CD4-positive, alpha-beta memory T cell (primary cell): ENCODE measurements at regions of chr14 and their contacts with region 1.

Region 1: DNA sequence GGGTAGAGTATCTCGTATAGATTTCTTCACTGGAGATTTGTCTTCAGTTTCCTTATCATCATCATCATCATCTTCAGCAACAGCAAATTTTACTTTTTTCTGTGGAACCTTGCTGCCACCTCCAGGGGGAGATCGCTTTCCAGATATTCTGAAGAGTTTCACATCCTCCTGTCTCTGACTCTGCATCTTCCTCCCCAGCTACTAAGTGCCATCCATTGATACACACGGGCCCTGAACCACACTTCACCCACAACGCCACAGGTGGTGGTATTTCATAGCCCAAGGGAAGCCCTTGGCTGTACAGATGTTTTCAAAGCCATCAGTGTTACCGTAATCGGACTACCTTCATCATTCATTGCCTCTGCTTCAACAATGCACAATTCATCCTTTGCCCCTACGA is 82.2 kb downstream of the PPP2R5C start:
- DNase-seq: peak; percentile 65 to 83 (median 67)
- H3K4me3 ChIP-seq: no peak overlapping the region
- H3K4me3 Mint-ChIP-seq: peak overlapping the region in 7 of 8 donors; percentile 23 to 81 (median 50)
- H3K27ac ChIP-seq: peak overlapping the region; percentile 7
- H3K27ac Mint-ChIP-seq: peak overlapping the region; percentile 76 to 95 (median 92)
- H3K4me1 ChIP-seq: peaks cover 96% of the 10 kb centered on the region
- H3K4me1 Mint-ChIP-seq: peaks cover 72 to 98% (median 86%) of the 10 kb centered on the region in 4 donors
- H3K27me3 ChIP-seq: no peaks in the 10 kb centered on the region
- H3K27me3 Mint-ChIP-seq: no peaks in the 10 kb centered on the region

Region 2: GRCh38 chr14:101774006-101774795 is 69.5 kb before region 1 on chr14:
- CTCF ChIA-PET with region 1: interaction called, 112 read pairs
- POLR2A ChIA-PET with region 1: interaction called, 33 read pairs
- intact Hi-C with region 1: loop called (anchors 1 kb)
- DNase-seq: no peak
- H3K4me3 ChIP-seq: no peak overlapping the region
- H3K4me3 Mint-ChIP-seq: no peak overlapping the region
- H3K27ac ChIP-seq: no peak overlapping the region
- H3K27ac Mint-ChIP-seq: peak overlapping the region in 3 of 7 donors; percentile 5 to 69 (median 42)
- H3K4me1 ChIP-seq: peaks cover 13% of the 10 kb centered on the region
- H3K4me1 Mint-ChIP-seq: peaks cover 14 to 42% (median 27%) of the 10 kb centered on the region in 4 donors
- H3K27me3 ChIP-seq: no peaks in the 10 kb centered on the region
- H3K27me3 Mint-ChIP-seq: no peaks in the 10 kb centered on the region

Region 3: GRCh38 chr14:101791919-101792572 is 51.6 kb before region 1 on chr14:
- CTCF ChIA-PET with region 1: interaction called, 9 read pairs
- POLR2A ChIA-PET with region 1: interaction called, 11 read pairs
- intact Hi-C with region 1: no loop called
- DNase-seq: peak in 4 of 5 donors; percentile 42 to 54 (median 44)
- H3K4me3 ChIP-seq: peak overlapping the region; percentile 13 to 41
- H3K4me3 Mint-ChIP-seq: peak overlapping the region; percentile 66 to 90 (median 80)
- H3K27ac ChIP-seq: peak overlapping the region; percentile 58
- H3K27ac Mint-ChIP-seq: peak overlapping the region; percentile 81 to 95 (median 86)
- H3K4me1 ChIP-seq: peaks cover 14% of the 10 kb centered on the region
- H3K4me1 Mint-ChIP-seq: peaks cover 18 to 36% (median 26%) of the 10 kb centered on the region in 4 donors
- H3K27me3 ChIP-seq: no peaks in the 10 kb centered on the region
- H3K27me3 Mint-ChIP-seq: no peaks in the 10 kb centered on the region

Region 4: GRCh38 chr14:101854366-101854765 is 10.7 kb after region 1 on chr14:
- CTCF ChIA-PET with region 1: interaction called, 5 read pairs
- POLR2A ChIA-PET with region 1: interaction called, 17 read pairs
- intact Hi-C with region 1: no loop called
- DNase-seq: peak; percentile 34 to 56 (median 43)
- H3K4me3 ChIP-seq: no peak overlapping the region
- H3K4me3 Mint-ChIP-seq: peak overlapping the region in 7 of 8 donors; percentile 49 to 80 (median 70)
- H3K27ac ChIP-seq: peak overlapping the region; percentile 39
- H3K27ac Mint-ChIP-seq: peak overlapping the region; percentile 45 to 94 (median 84)
- H3K4me1 ChIP-seq: peaks cover 93% of the 10 kb centered on the region
- H3K4me1 Mint-ChIP-seq: peaks cover 74 to 96% (median 84%) of the 10 kb centered on the region in 4 donors
- H3K27me3 ChIP-seq: no peaks in the 10 kb centered on the region
- H3K27me3 Mint-ChIP-seq: no peaks in the 10 kb centered on the region

Region 5: DNA sequence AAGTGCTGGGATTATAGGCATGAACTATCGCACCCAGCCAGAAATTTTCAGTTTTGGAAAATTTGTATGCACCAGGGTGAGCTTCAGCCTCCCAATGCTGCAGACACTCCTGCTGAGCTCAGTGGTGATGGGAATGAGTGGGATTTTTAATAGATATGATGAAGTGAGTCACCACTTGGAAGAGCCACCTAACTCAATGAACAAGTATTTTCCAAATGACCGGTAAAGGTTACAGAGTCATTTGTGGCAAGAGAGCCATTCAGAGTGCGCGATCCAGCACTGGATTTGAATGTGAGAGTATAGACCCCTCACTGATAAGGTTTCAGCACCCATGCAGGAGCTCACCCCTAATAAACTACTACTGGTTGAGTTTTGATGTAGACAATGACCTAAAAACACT is 18.5 kb after region 1 on chr14:
- CTCF ChIA-PET with region 1: interaction called, 10 read pairs
- POLR2A ChIA-PET with region 1: interaction called, 3 read pairs
- intact Hi-C with region 1: no loop called
- DNase-seq: no peak
- H3K4me3 ChIP-seq: no peak overlapping the region
- H3K4me3 Mint-ChIP-seq: no peak overlapping the region
- H3K27ac ChIP-seq: no peak overlapping the region
- H3K27ac Mint-ChIP-seq: peak overlapping the region in 4 of 7 donors; percentile 18 to 74 (median 70)
- H3K4me1 ChIP-seq: peaks cover 51% of the 10 kb centered on the region
- H3K4me1 Mint-ChIP-seq: peaks cover 34 to 76% (median 59%) of the 10 kb centered on the region in 4 donors
- H3K27me3 ChIP-seq: no peaks in the 10 kb centered on the region
- H3K27me3 Mint-ChIP-seq: no peaks in the 10 kb centered on the region

Region 6: GRCh38 chr14:101876555-101876938 is 32.9 kb after region 1 on chr14:
- CTCF ChIA-PET with region 1: interaction called, 5 read pairs
- POLR2A ChIA-PET with region 1: interaction called, 9 read pairs
- intact Hi-C with region 1: loop called (anchors 5 kb)
- DNase-seq: peak; percentile 71 to 94 (median 82)
- H3K4me3 ChIP-seq: peak overlapping the region in 1 of 2 donors; percentile 8
- H3K4me3 Mint-ChIP-seq: peak overlapping the region; percentile 59 to 86 (median 76)
- H3K27ac ChIP-seq: peak overlapping the region; percentile 65
- H3K27ac Mint-ChIP-seq: peak overlapping the region; percentile 73 to 97 (median 91)
- H3K4me1 ChIP-seq: peaks cover 88% of the 10 kb centered on the region
- H3K4me1 Mint-ChIP-seq: peaks cover 55 to 88% (median 74%) of the 10 kb centered on the region in 4 donors
- H3K27me3 ChIP-seq: no peaks in the 10 kb centered on the region
- H3K27me3 Mint-ChIP-seq: no peaks in the 10 kb centered on the region

Region 7: GRCh38 chr14:101897326-101897725 is 53.7 kb after region 1 on chr14:
- CTCF ChIA-PET with region 1: no interaction called
- POLR2A ChIA-PET with region 1: no interaction called
- intact Hi-C with region 1: loop called (anchors 2 kb)
- DNase-seq: no peak
- H3K4me3 ChIP-seq: no peak overlapping the region
- H3K4me3 Mint-ChIP-seq: no peak overlapping the region
- H3K27ac ChIP-seq: no peak overlapping the region
- H3K27ac Mint-ChIP-seq: peak overlapping the region in 3 of 7 donors; percentile 32 to 46 (median 41)
- H3K4me1 ChIP-seq: no peaks in the 10 kb centered on the region
- H3K4me1 Mint-ChIP-seq: no peaks in the 10 kb centered on the region
- H3K27me3 ChIP-seq: no peaks in the 10 kb centered on the region
- H3K27me3 Mint-ChIP-seq: no peaks in the 10 kb centered on the region

Region 8: DNA sequence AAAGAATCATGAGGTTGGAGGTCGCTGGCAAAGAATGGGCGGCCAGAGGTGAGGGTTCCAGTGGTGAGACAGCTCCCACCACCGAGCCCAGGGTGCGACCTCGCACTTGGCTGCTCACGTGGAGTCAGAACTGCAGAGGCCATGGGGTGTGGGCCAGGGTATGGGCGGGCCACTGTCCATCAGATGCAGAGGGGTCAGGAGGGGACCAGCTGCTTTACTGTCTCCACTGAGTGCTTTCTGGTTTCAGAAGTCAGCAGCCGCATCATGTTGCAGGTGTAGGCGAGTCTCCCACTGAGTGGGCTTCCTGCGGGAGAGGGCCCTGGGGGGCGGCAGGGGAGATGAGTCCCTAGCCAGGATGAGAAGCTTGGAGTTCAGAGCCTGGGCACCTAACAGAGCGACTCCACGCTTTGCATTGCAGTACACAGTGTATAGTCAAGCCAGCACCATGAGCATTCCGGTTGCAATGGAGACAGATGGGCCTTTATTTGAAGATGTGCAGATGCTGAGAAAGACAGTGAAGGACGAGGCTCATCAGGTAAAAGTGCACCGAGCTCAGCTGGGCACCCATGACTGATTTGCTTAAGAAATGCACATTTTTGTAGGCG is 73.8 kb after region 1 on chr14:
- CTCF ChIA-PET with region 1: no interaction called
- POLR2A ChIA-PET with region 1: no interaction called
- intact Hi-C with region 1: no loop called
- DNase-seq: no peak
- H3K4me3 ChIP-seq: no peak overlapping the region
- H3K4me3 Mint-ChIP-seq: no peak overlapping the region
- H3K27ac ChIP-seq: no peak overlapping the region
- H3K27ac Mint-ChIP-seq: peak overlapping the region in 3 of 7 donors; percentile 23 to 88 (median 30)
- H3K4me1 ChIP-seq: no peaks in the 10 kb centered on the region
- H3K4me1 Mint-ChIP-seq: peaks cover 0 to 14% (median 1%) of the 10 kb centered on the region in 4 donors
- H3K27me3 ChIP-seq: no peaks in the 10 kb centered on the region
- H3K27me3 Mint-ChIP-seq: no peaks in the 10 kb centered on the region